Naive thymus-derived CD4-positive, alpha-beta T cell (primary cell): ENCODE measurements at regions of chr9 and their contacts with region 1.

Region 1: DNA sequence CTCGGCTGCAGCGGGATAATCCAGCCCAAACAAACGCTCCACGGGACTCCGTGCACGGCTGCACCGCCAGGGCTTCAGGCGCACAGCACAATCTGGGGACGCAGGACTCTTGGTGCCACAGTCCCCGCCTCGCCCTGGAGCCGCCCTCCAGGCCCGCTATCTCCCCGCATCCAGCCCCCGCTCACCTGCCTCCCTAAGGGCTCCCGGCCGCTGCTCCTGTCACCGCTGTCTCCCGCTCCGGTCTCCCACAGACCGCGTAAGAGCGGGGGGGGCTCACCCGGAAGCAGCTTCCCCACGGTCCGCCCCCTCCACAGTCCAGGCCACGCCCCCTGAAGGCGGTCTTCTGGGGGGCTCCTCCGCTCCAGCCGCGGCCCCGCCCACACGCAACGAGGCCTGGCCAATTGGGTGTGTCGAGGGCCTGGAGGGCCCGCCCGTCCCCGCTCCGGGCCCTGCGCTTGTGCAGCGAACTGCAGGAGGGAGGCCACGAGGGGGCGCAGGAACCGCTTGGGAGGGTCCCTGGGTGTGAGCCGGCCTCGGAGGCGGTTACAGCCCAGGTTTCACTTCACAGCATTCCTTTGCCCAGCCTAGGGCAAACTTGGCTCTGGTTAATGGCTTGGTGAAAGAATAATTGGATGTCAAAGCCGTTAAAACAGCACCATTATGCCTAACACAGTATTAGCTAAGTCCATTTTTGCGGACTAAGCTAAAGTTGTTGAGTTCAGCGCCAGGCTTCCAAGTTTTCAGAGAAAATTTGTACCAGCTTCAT is at the start of gene ALAD:
- DNase-seq: peak; percentile 99 to 100 (median 99)
- ATAC-seq: peak; percentile 99
- H3K4me3 ChIP-seq: peak within 1 kb of the TSS; percentile 82
- H3K4me3 Mint-ChIP-seq: peak within 1 kb of the TSS; percentile 89 to 96 (median 95)
- H3K27ac ChIP-seq: peak within 1 kb of the TSS; percentile 74
- H3K27ac Mint-ChIP-seq: peak within 1 kb of the TSS; percentile 81 to 91 (median 87)
- H3K4me1 ChIP-seq: peaks cover 12 to 13% of the 10 kb centered on the region in 2 donors
- H3K4me1 Mint-ChIP-seq: peaks cover 18 to 37% (median 25%) of the 10 kb centered on the region in 7 donors
- H3K27me3 ChIP-seq: no peaks in the 10 kb centered on the region
- H3K27me3 Mint-ChIP-seq: no peaks in the 10 kb centered on the region
- total RNA-seq, gene ALAD: 25.1 to 45.5 (median 39.1) TPM

Region 2: DNA sequence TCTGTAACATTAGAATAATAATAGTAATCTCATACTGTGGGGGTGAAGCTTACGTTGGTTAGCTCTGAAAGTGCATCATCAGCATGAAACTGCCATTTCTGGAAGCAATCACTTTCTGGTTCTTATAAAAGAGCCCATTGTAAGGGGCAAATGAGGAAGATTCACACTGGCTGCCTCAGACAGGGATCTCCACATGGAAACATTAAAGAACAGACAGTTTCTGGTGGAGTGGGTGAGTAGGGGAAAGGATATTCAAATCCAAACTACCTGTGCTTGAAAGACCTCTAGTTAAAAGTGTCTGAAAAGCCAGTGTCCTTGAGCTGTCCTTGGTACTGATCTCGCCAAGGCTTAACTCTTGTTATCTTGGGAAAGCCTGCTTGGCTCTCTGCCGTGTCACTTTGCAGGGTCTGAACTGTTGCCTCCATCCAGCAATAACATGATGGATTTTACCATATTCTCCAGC is 269.5 kb before region 1 on chr9:
- CTCF ChIA-PET with region 1: no interaction called
- POLR2A ChIA-PET with region 1: no interaction called
- intact Hi-C with region 1: no loop called
- DNase-seq: no peak
- ATAC-seq: no peak
- H3K4me3 ChIP-seq: no peak overlapping the region
- H3K4me3 Mint-ChIP-seq: no peak overlapping the region
- H3K27ac ChIP-seq: no peak overlapping the region
- H3K27ac Mint-ChIP-seq: no peak overlapping the region
- H3K4me1 ChIP-seq: no peaks in the 10 kb centered on the region
- H3K4me1 Mint-ChIP-seq: peaks cover 0 to 2% (median 0%) of the 10 kb centered on the region in 7 donors
- H3K27me3 ChIP-seq: no peaks in the 10 kb centered on the region
- H3K27me3 Mint-ChIP-seq: peaks cover 18 to 47% (median 30%) of the 10 kb centered on the region in 5 donors

Region 3: GRCh38 chr9:113150670-113151611 is 250.3 kb before region 1 on chr9 and contains the start of gene SLC31A2:
- CTCF ChIA-PET with region 1: interaction called, 3 read pairs
- POLR2A ChIA-PET with region 1: no interaction called
- intact Hi-C with region 1: loop called in 1 of 2 experiments (anchors 2 kb)
- DNase-seq: peak; percentile 73 to 93 (median 80)
- ATAC-seq: peak; percentile 92
- H3K4me3 ChIP-seq: peak within 1 kb of the TSS; percentile 78
- H3K4me3 Mint-ChIP-seq: peak within 1 kb of the TSS; percentile 58 to 88 (median 84)
- H3K27ac ChIP-seq: peak within 1 kb of the TSS; percentile 73
- H3K27ac Mint-ChIP-seq: peak within 1 kb of the TSS; percentile 38 to 76 (median 68)
- H3K4me1 ChIP-seq: peaks cover 10 to 15% of the 10 kb centered on the region in 2 donors
- H3K4me1 Mint-ChIP-seq: peaks cover 16 to 42% (median 36%) of the 10 kb centered on the region in 7 donors
- H3K27me3 ChIP-seq: no peaks in the 10 kb centered on the region
- H3K27me3 Mint-ChIP-seq: peaks cover 1 to 6% (median 4%) of the 10 kb centered on the region in 5 donors
- total RNA-seq, gene SLC31A2: 5.3 to 39.2 (median 5.4) TPM

Region 4: GRCh38 chr9:113309204-113309813 is 91.9 kb before region 1 on chr9:
- CTCF ChIA-PET with region 1: interaction called, 3 read pairs
- POLR2A ChIA-PET with region 1: no interaction called
- intact Hi-C with region 1: loop called (anchors 1 kb)
- DNase-seq: peak in 5 of 9 donors; percentile 19 to 45 (median 33)
- ATAC-seq: peak; percentile 57
- H3K4me3 ChIP-seq: no peak overlapping the region
- H3K4me3 Mint-ChIP-seq: no peak overlapping the region
- H3K27ac ChIP-seq: no peak overlapping the region
- H3K27ac Mint-ChIP-seq: no peak overlapping the region
- H3K4me1 ChIP-seq: no peaks in the 10 kb centered on the region
- H3K4me1 Mint-ChIP-seq: no peaks in the 10 kb centered on the region
- H3K27me3 ChIP-seq: no peaks in the 10 kb centered on the region
- H3K27me3 Mint-ChIP-seq: peaks cover 0 to 7% (median 0%) of the 10 kb centered on the region in 5 donors

Region 5: GRCh38 chr9:113349445-113350094 is 51.6 kb before region 1 on chr9 and contains the start of gene BSPRY:
- CTCF ChIA-PET with region 1: no interaction called
- POLR2A ChIA-PET with region 1: no interaction called
- intact Hi-C with region 1: loop called (anchors 1 to 2 kb)
- DNase-seq: peak in 7 of 9 donors; percentile 27 to 67 (median 44)
- ATAC-seq: peak; percentile 70
- H3K4me3 ChIP-seq: peak within 1 kb of the TSS; percentile 54
- H3K4me3 Mint-ChIP-seq: peak within 1 kb of the TSS; percentile 73 to 93 (median 81)
- H3K27ac ChIP-seq: no peak within 1 kb of the TSS
- H3K27ac Mint-ChIP-seq: peak within 1 kb of the TSS in 3 of 9 donors; percentile 5 to 87 (median 57)
- H3K4me1 ChIP-seq: peaks cover 13 to 15% of the 10 kb centered on the region in 2 donors
- H3K4me1 Mint-ChIP-seq: peaks cover 10 to 49% (median 21%) of the 10 kb centered on the region in 7 donors
- H3K27me3 ChIP-seq: peaks cover 3 to 5% of the 10 kb centered on the region in 2 donors
- H3K27me3 Mint-ChIP-seq: peaks cover 0 to 40% (median 29%) of the 10 kb centered on the region in 5 donors
- total RNA-seq, gene BSPRY: 0.13 to 9.6 (median 1.2) TPM in 3 of 5 experiments, not detected in the others

Region 6: DNA sequence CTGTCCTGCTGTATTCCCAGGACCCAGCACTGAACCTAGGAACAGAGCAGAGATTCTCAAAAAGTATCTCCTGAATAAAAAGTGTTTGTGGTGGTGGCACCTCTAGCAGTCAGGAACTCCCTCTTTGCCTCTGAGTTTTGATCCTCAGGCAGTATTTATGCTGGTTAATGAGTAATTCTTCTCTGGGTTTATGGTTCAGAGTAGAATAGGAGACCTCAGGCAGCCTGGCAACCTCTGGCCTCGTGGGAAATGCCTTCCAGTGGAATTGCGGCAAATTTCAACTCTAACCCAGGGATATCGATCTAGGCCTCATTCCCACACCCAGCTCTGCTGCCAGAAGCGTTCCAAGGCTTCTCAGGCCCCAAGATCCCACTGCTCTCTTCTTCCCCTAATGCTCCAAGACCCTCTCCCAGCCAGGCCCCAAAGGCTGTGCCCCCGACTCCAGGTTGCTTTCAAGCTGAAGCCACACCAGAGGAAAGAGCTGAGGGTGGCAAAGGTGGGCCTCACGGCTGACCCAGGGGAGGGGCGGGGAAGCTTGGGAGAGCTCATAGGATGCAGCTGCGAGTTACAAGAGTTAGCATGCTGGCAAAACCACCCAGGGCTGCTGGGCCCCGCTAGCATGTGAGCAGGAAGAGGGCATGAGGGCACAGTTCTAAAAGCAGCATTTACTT is 13.5 kb before region 1 on chr9:
- CTCF ChIA-PET with region 1: no interaction called
- POLR2A ChIA-PET with region 1: no interaction called
- intact Hi-C with region 1: no loop called
- DNase-seq: no peak
- ATAC-seq: no peak
- H3K4me3 ChIP-seq: no peak overlapping the region
- H3K4me3 Mint-ChIP-seq: no peak overlapping the region
- H3K27ac ChIP-seq: no peak overlapping the region
- H3K27ac Mint-ChIP-seq: peak overlapping the region in 1 of 9 donors; percentile 18
- H3K4me1 ChIP-seq: no peaks in the 10 kb centered on the region
- H3K4me1 Mint-ChIP-seq: peaks cover 0 to 4% (median 0%) of the 10 kb centered on the region in 7 donors
- H3K27me3 ChIP-seq: no peaks in the 10 kb centered on the region
- H3K27me3 Mint-ChIP-seq: no peaks in the 10 kb centered on the region

Region 7: GRCh38 chr9:113446323-113446740 is 45.1 kb after region 1 on chr9:
- CTCF ChIA-PET with region 1: interaction called, 5 read pairs
- POLR2A ChIA-PET with region 1: no interaction called
- intact Hi-C with region 1: loop called in 1 of 2 experiments (anchors 2 kb)
- DNase-seq: peak in 6 of 9 donors; percentile 20 to 51 (median 42)
- ATAC-seq: no peak
- H3K4me3 ChIP-seq: no peak overlapping the region
- H3K4me3 Mint-ChIP-seq: no peak overlapping the region
- H3K27ac ChIP-seq: no peak overlapping the region
- H3K27ac Mint-ChIP-seq: no peak overlapping the region
- H3K4me1 ChIP-seq: no peaks in the 10 kb centered on the region
- H3K4me1 Mint-ChIP-seq: peaks cover 0 to 3% (median 0%) of the 10 kb centered on the region in 7 donors
- H3K27me3 ChIP-seq: no peaks in the 10 kb centered on the region
- H3K27me3 Mint-ChIP-seq: no peaks in the 10 kb centered on the region

Region 8: DNA sequence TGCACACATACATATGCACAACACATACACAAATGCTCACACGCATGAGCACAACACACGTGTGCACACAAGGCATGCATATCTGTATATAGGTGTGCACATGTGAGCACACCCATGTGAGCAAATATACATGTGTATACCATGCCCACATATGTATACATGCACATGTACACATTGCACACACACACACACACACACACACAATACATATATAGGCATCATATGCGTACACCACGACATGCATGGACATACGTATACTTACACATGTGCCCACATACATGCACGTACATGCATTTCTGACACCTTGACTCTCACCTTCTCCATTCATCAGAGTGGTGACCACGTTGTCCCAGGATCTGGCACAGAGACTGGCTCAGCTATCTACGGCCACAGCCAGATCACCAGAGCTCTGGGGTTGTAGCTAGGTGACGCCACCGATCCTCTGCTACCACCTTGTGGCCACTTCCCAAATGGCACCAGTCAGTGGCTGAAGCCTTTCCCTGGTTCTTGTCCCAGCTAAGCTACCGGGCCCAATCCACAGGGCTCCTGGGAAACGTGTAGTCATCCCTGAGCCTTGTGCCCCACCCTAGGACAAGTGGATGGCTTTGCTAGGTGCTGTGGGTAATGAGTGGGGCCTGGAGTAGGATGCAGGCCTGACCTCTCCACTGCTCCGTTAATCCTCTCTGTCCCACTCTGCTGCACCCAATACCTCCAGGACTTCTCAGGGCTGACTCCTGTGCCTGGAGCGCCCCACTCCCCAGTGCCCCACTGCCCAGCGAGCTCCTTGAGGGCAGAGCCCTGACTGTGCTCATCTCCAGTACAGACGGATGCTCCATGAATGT is 256.7 kb after region 1 on chr9:
- CTCF ChIA-PET with region 1: interaction called, 4 read pairs
- POLR2A ChIA-PET with region 1: no interaction called
- intact Hi-C with region 1: loop called (anchors 1 kb)
- DNase-seq: peak; percentile 43 to 82 (median 66)
- ATAC-seq: peak; percentile 91
- H3K4me3 ChIP-seq: no peak overlapping the region
- H3K4me3 Mint-ChIP-seq: no peak overlapping the region
- H3K27ac ChIP-seq: no peak overlapping the region
- H3K27ac Mint-ChIP-seq: peak overlapping the region in 1 of 9 donors; percentile 47
- H3K4me1 ChIP-seq: no peaks in the 10 kb centered on the region
- H3K4me1 Mint-ChIP-seq: peaks cover 0 to 9% (median 2%) of the 10 kb centered on the region in 7 donors
- H3K27me3 ChIP-seq: no peaks in the 10 kb centered on the region
- H3K27me3 Mint-ChIP-seq: peaks cover 9 to 23% (median 21%) of the 10 kb centered on the region in 5 donors

Region 9: DNA sequence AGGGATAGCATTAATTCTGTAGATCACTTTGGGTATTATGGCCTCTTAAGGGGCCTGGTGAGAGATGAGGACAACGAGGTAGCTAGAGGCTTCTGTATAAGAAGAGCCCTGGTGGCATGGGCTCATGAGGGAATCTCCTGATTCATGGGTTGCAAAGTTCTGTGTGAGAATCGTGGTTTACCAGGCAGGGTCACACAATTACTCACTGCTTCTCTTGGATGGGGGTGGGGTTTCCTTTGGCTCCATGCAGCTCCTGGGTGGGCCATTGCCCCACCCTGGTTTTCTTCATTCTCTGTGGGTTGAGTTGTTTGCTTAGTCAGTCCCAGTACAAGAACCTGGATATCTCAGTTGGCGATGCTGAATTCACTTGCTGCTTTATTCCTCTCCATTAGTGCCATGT is 1435.6 kb after region 1 on chr9:
- CTCF ChIA-PET with region 1: no interaction called
- POLR2A ChIA-PET with region 1: no interaction called
- intact Hi-C with region 1: no loop called
- DNase-seq: peak in 1 of 9 donors; percentile 30
- ATAC-seq: no peak
- H3K4me3 ChIP-seq: no peak overlapping the region
- H3K4me3 Mint-ChIP-seq: no peak overlapping the region
- H3K27ac ChIP-seq: no peak overlapping the region
- H3K27ac Mint-ChIP-seq: no peak overlapping the region
- H3K4me1 ChIP-seq: no peaks in the 10 kb centered on the region
- H3K4me1 Mint-ChIP-seq: peaks cover 6 to 28% (median 11%) of the 10 kb centered on the region in 7 donors
- H3K27me3 ChIP-seq: no peaks in the 10 kb centered on the region
- H3K27me3 Mint-ChIP-seq: peaks cover 0 to 17% (median 0%) of the 10 kb centered on the region in 5 donors